GM13977 (cell line): ENCODE measurements at regions of chr2 and their contacts with region 1.

Region 1: DNA sequence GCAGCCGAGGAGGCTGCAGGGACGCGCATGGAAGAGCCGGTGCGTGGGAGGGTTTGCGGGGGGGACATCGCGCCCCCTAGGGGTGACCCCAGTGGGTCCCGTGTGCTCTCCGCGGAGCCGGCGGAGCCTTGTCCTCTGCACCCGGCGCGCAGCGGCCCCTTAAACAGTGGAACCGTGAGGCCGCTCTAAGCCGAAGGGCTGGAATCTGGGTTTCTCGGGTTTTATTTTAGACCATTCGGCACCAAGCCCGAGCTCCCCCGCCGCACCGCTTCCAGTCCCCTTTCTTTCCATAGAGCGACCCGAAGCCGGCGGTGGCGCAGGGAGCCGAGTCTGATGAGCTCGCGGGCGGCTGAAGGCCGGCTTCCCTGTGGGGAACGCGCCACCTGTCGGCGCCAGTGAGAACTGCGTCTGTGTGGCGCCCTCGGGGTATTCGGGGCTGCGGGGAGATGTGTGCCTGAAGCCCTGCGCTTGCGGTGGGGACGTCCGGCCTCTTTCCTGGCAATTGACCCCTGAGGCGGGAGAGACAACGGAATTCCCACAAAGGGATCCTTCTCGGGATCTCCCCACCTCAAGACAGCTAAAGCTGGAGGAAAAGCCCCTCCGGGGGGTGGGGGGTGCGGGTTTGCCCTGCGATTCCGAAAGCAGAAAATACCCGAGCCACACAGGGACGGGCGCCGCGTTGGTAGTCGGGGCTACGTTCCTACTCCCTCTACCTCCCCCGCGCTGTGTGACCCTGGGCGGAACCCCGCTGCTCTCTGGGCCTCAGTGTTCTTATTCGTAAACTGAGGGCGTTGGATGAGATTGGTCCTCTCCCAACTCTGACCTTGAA is 8.2 kb upstream of the EN1 start:
- DNase-seq: peak; percentile 94
- CTCF ChIP-seq: peak; percentile 99

Region 2: GRCh38 chr2:118032169-118033013 is 823.3 kb before region 1 on chr2:
- in situ Hi-C with region 1: loop called (anchors 25 kb)
- DNase-seq: peak; percentile 54
- CTCF ChIP-seq: peak; percentile 82

Region 3: DNA sequence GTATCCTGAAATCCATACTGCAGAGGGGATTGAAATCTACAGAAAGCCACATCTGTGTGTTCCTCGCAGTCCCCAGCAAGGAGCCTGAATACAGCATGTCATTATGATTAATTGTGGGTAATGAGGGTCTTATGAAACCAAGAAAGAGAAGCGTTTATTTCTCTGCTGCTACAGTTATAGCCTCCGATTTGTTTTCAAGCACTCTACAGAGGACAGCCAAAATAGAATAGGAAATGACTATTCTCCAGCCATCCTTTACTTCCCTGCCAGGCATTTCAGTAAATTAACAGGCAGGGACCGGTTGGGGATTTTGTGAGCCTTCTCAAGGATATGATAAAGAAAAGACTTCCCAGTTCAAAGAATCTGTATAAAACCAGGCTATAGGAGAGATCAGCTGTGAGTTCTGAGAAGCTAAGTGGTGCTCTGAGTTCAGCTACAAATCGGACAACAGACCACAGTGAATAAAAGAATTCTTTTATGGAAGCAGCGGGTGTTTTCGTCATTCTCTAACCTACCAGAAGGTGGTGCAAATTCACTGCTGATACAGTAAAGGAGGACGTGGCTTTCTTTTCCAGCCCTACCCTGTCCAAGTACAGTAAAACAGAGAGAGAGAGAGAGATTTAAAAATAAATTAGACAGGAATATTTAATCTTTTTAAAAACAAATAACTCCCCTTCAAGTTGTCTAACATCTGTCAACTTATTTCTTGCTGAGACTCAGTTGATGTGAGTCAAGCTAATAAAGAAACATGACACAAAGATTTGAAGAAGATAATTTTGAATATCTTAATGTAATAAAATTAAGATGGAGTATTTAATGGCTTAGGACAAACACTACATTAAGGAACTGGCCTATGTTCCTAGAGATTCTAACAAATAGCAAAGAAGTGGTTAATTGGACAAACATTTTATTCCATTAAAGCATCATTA is 633.7 kb before region 1 on chr2:
- in situ Hi-C with region 1: loop called (anchors 10 kb)
- DNase-seq: peak; percentile 69
- CTCF ChIP-seq: peak; percentile 77